Activated T-helper 2 cell treated with anti-CD3 and anti-CD28 coated beads, Interferon-gamma antibody, Interleukin-2, Interleukin-4, amounts not matched to agents 10 μg/mL and 5 μg/mL and 100 μg/mL, durations not matched to agents 14 hours and 24 hours and 36 hours (primary cell): ENCODE measurements at regions of chr5 and their contacts with region 1.

Region 1: DNA sequence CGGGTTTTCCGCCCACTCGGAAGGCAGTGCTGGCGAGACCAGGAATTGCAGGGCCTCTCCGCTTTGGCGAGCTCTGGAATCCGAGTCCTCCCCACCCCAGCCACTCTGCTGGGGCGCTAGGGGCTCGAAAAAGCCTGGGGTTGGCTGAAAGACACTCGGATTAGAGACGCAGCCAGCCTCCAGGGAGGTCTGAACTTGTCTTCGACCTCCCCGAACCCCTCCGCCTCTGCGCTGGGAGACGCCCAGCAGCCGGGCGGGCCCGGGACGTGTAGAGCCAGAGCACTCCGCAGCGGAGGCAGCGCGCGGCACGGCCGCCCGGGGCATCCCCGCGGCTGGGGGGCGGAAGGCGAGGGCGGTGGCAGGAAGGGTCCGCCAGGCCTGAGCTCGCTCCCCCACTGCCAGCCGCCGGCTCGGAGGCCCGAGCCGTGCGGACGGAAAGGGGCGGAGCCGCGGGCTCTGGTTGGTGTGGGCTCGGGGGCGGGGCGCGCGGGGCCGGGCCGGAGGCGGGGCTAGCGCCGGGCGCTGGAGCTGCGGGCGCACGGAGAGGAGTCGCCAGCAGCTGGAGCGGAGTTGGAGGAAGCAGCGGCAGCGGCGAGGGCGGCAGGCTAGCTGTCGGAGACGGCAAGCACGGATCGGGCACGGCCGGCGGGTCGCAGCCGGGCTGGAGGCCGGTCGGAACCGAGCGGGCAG is at the start of gene PIK3R1:
- DNase-seq: peak; percentile 89
- H3K4me3 Mint-ChIP-seq: peak within 1 kb of the TSS; percentile 91
- H3K27ac Mint-ChIP-seq: peak within 1 kb of the TSS; percentile 94
- H3K4me1 Mint-ChIP-seq: peaks cover 34% of the 10 kb centered on the region
- H3K27me3 Mint-ChIP-seq: peaks cover 6% of the 10 kb centered on the region
- total RNA-seq, gene PIK3R1: 58.8 and 60.0 TPM in 2 replicates

Region 2: DNA sequence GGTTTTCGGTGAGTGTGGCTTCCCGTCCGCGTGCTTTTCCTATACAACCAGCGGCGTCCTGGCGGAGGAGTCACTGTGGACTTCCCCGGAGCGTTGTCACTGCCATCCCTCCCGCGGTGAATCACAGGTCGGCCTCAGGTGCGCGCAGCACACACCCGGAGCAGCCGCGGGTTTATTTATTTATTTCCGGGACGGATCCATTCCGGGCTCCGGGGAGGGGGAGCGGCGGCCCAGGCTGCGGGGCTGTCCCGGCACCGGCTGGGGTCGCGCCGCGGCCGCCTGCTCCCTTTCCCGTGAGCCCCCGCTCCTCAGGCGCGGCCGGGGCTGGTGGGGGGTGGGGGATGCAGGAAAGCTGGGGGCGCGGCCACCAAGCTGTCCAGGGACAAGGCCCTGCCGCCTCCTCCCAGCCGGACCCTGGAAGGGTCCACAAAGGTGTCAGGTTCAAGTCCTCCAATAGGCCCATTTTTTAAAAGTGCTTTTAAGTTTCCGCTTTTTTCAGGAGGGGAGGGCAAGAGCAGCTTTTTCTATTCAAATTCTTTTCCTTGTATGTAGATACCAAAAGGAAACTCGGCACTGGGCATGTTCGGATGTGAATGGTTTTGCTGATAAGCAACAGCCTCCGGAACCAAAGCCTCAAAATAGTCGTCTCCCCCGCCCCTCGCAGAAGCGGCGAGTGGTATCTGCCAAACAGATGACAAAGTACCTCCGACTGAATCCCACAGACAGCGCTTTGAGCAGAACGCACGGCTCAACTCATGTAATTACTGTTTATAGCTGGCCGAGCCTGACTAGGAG is 1211.2 kb before region 1 on chr5:
- intact Hi-C with region 1: loop called (anchors 10 kb)
- DNase-seq: peak; percentile 85
- H3K4me3 Mint-ChIP-seq: peak overlapping the region; percentile 82
- H3K27ac Mint-ChIP-seq: peak overlapping the region; percentile 82
- H3K4me1 Mint-ChIP-seq: peaks cover 56% of the 10 kb centered on the region
- H3K27me3 Mint-ChIP-seq: peaks cover 17% of the 10 kb centered on the region

Region 3: GRCh38 chr5:68239487-68239886 is 24.1 kb after region 1 on chr5:
- intact Hi-C with region 1: loop called (anchors 1 kb)
- DNase-seq: peak; percentile 64
- H3K4me3 Mint-ChIP-seq: peak overlapping the region; percentile 15
- H3K27ac Mint-ChIP-seq: peak overlapping the region; percentile 75
- H3K4me1 Mint-ChIP-seq: peaks cover 56% of the 10 kb centered on the region
- H3K27me3 Mint-ChIP-seq: no peaks in the 10 kb centered on the region

Region 4: GRCh38 chr5:68272289-68272688 is 56.9 kb after region 1 on chr5:
- intact Hi-C with region 1: loop called (anchors 5 kb)
- DNase-seq: no peak
- H3K4me3 Mint-ChIP-seq: no peak overlapping the region
- H3K27ac Mint-ChIP-seq: no peak overlapping the region
- H3K4me1 Mint-ChIP-seq: peaks cover 86% of the 10 kb centered on the region
- H3K27me3 Mint-ChIP-seq: no peaks in the 10 kb centered on the region

Region 5: DNA sequence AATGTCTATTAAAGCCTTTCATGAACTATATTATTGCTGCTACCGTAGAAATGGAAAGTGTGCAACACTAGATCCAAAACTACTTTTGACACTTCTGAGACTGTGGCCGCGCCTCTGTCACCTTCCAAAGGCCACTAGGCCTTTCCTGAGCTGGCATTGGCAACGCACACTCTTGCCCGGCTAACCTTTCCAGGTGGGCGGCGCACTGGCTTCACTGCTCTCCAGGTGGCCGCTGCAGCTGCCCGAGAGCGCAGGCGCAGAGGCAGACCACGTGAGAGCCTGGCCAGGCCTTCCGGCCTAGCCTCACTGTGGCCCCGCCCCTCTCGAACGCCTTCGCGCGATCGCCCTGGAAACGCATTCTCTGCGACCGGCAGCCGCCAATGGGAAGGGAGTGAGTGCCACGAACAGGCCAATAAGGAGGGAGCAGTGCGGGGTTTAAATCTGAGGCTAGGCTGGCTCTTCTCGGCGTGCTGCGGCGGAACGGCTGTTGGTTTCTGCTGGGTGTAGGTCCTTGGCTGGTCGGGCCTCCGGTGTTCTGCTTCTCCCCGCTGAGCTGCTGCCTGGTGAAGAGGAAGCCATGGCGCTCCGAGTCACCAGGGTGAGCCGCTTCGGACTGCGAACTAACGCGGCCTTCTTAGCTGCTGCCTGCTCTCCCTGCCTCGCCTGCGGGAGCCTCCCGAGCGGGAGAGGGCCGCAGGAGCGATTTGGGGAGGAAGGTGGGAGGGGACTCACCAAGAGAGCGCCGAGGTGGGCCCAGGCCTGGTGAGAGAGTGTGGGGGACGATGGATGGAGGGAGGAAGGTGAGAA is 951.5 kb after region 1 on chr5 and contains the start of gene CCNB1:
- intact Hi-C with region 1: loop called (anchors 10 kb)
- DNase-seq: peak; percentile 99
- H3K4me3 Mint-ChIP-seq: peak within 1 kb of the TSS; percentile 94
- H3K27ac Mint-ChIP-seq: peak within 1 kb of the TSS; percentile 69
- H3K4me1 Mint-ChIP-seq: peaks cover 32% of the 10 kb centered on the region
- H3K27me3 Mint-ChIP-seq: no peaks in the 10 kb centered on the region
- total RNA-seq, gene CCNB1: 152 and 164 TPM in 2 replicates